ENCODE measurements at regions of chr15 and their contacts with region 1.

Region 1: DNA sequence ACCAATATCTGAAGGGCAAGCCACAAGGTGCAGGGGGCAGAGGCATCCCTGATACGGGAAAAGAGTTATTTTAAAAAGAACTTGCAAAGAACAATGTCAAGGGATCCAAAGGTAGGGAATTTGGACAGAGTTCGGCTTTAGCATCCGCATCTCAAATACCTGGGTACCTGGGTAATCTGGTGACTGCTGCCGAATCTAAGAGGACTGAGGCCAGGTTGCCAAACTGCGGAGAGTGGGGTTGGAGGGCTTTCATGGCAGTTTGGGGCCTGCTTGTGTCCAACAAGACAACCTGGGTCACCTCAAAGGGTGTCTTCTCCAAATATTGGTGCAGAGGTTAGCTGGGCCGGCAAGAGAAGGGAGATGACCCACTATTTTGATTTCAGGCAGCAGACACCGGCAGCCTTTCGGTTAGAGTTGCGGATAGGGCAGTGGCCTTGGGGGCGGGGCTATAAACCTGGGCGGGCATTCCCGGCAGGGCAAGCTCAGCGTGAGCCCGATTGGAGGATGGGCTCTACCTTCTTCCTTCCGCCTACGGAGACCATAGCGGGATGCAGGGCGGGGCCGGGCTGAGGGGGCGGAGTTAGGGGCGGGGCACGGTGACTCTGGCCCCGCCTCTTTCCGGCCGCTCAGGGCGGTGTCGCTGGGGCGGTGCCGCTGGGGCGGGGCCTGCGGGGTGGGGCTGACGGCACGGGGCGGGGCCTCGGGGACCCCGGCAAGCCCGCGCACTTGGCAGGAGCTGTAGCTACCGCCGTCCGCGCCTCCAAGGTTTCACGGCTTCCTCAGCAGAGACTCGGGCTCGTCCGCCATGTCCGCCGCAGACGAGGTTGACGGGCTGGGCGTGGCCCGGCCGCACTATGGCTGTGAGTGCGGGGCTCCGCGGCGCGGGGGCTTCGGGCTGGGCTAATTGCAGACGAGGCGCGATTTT is at the start of gene IQGAP1:
- DNase-seq: peak; percentile 99
- ATAC-seq: peak; percentile 95
- H3K4me3 Mint-ChIP-seq: peak within 1 kb of the TSS; percentile 87
- H3K27ac Mint-ChIP-seq: peak within 1 kb of the TSS; percentile 98
- H3K4me1 Mint-ChIP-seq: peaks cover 46% of the 10 kb centered on the region
- H3K27me3 Mint-ChIP-seq: no peaks in the 10 kb centered on the region
- total RNA-seq, gene IQGAP1: 249 to 257 TPM

Region 2: GRCh38 chr15:90376789-90377188 is 11.0 kb before region 1 on chr15:
- CTCF ChIA-PET with region 1: interaction called, 9 read pairs
- POLR2A ChIA-PET with region 1: interaction called, 40 read pairs
- DNase-seq: peak; percentile 89
- ATAC-seq: peak; percentile 96
- H3K4me3 Mint-ChIP-seq: peak overlapping the region; percentile 62
- H3K27ac Mint-ChIP-seq: peak overlapping the region; percentile 92
- H3K4me1 Mint-ChIP-seq: peaks cover 54% of the 10 kb centered on the region
- H3K27me3 Mint-ChIP-seq: no peaks in the 10 kb centered on the region

Region 3: GRCh38 chr15:90400406-90401314 is 12.9 kb after region 1 on chr15:
- CTCF ChIA-PET with region 1: interaction called, 12 read pairs
- POLR2A ChIA-PET with region 1: interaction called, 48 read pairs
- DNase-seq: peak; percentile 84
- ATAC-seq: peak; percentile 96
- H3K4me3 Mint-ChIP-seq: peak overlapping the region; percentile 68
- H3K27ac Mint-ChIP-seq: peak overlapping the region; percentile 93
- H3K4me1 Mint-ChIP-seq: peaks cover 60% of the 10 kb centered on the region
- H3K27me3 Mint-ChIP-seq: no peaks in the 10 kb centered on the region

Region 4: DNA sequence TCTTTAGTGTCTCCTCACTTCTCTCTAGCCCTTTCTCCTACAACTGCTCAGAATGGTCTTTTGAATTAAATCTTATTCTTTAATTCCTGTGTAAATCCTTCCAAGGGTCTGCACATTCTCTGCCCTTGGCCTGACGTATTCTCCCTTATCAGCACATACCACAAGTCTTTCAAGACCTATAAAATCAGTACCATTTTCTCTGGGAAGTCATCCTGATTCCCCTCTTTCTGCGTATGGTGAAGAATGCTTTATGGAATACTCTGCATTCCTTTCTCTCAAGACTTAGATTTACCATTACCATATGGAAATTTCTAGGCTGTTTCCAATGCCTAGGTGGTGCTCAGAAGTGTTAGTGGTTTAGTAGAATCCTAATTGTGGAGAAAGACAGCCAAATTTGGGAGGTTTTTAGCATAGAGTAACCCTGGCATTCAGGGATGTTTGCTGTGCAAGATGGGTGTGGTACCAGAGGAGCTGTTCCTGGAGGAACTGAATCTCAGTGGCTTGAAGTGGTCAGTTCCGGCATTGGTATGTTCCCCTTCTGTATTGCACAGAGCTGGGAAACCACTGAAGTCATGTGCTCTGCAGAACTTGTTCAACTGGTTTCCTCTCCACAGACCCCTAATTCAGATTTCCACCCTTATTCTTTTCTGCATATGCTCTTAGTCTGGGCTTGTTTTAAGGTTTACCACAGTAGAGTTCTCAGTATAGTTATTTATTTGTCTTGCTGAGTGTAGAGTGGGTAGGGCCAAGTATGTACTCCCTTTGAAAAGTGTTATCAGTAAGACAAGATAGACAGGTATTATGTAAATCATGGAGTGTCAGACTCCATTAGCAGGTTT is 24.8 kb after region 1 on chr15:
- CTCF ChIA-PET with region 1: no interaction called
- POLR2A ChIA-PET with region 1: interaction called, 18 read pairs
- DNase-seq: peak; percentile 54
- ATAC-seq: peak; percentile 57
- H3K4me3 Mint-ChIP-seq: peak overlapping the region; percentile 37
- H3K27ac Mint-ChIP-seq: peak overlapping the region; percentile 74
- H3K4me1 Mint-ChIP-seq: peaks cover 78% of the 10 kb centered on the region
- H3K27me3 Mint-ChIP-seq: no peaks in the 10 kb centered on the region

Region 5: GRCh38 chr15:90451053-90451850 is 63.5 kb after region 1 on chr15:
- CTCF ChIA-PET with region 1: no interaction called
- POLR2A ChIA-PET with region 1: no interaction called
- DNase-seq: no peak
- ATAC-seq: no peak
- H3K4me3 Mint-ChIP-seq: no peak overlapping the region
- H3K27ac Mint-ChIP-seq: no peak overlapping the region
- H3K4me1 Mint-ChIP-seq: peaks cover 11% of the 10 kb centered on the region
- H3K27me3 Mint-ChIP-seq: no peaks in the 10 kb centered on the region

Region 6: GRCh38 chr15:90519688-90520087 is 131.9 kb after region 1 on chr15:
- CTCF ChIA-PET with region 1: no interaction called
- POLR2A ChIA-PET with region 1: no interaction called
- DNase-seq: no peak
- ATAC-seq: no peak
- H3K4me3 Mint-ChIP-seq: no peak overlapping the region
- H3K27ac Mint-ChIP-seq: no peak overlapping the region
- H3K4me1 Mint-ChIP-seq: peaks cover 12% of the 10 kb centered on the region
- H3K27me3 Mint-ChIP-seq: no peaks in the 10 kb centered on the region